B cell (primary cell): ENCODE measurements at regions of chr6 and their contacts with region 1.

Region 1: GRCh38 chr6:33323623-33323948 is 6.0 kb upstream of the ZBTB22 start:
- DNase-seq: no peak
- ATAC-seq: no peak
- H3K4me3 ChIP-seq: peak overlapping the region; percentile 72 to 93 (median 85)
- H3K4me3 Mint-ChIP-seq: peak overlapping the region; percentile 91
- H3K27ac ChIP-seq: peak overlapping the region; percentile 85 to 95
- H3K27ac Mint-ChIP-seq: peak overlapping the region; percentile 93
- H3K4me1 ChIP-seq: peaks cover 43 to 63% of the 10 kb centered on the region in 2 donors
- H3K4me1 Mint-ChIP-seq: peaks cover 59% of the 10 kb centered on the region
- H3K27me3 ChIP-seq: no peaks in the 10 kb centered on the region
- H3K27me3 Mint-ChIP-seq: no peaks in the 10 kb centered on the region
- CTCF ChIP-seq: no peak

Region 2: GRCh38 chr6:33288921-33289748 is 34.5 kb before region 1 on chr6 and contains the starts of genes PFDN6 and WDR46:
- CTCF ChIA-PET with region 1: interaction called, 10 read pairs
- POLR2A ChIA-PET with region 1: interaction called, 15 read pairs
- intact Hi-C with region 1: loop called (anchors 1 kb)
- DNase-seq: peak; percentile 93
- ATAC-seq: peak; percentile 96
- H3K4me3 ChIP-seq: peak within 1 kb of the TSS; percentile 78 to 99 (median 86)
- H3K4me3 Mint-ChIP-seq: peak within 1 kb of the TSS; percentile 93
- H3K27ac ChIP-seq: peak within 1 kb of the TSS; percentile 42 to 68
- H3K27ac Mint-ChIP-seq: peak within 1 kb of the TSS; percentile 86
- H3K4me1 ChIP-seq: peaks cover 19 to 25% of the 10 kb centered on the region in 2 donors
- H3K4me1 Mint-ChIP-seq: peaks cover 38% of the 10 kb centered on the region
- H3K27me3 ChIP-seq: no peaks in the 10 kb centered on the region
- H3K27me3 Mint-ChIP-seq: no peaks in the 10 kb centered on the region
- CTCF ChIP-seq: no peak
- total RNA-seq, gene PFDN6: 44.7 and 51.1 TPM in 2 replicates
- total RNA-seq, gene WDR46: 66.4 and 77.2 TPM in 2 replicates

Region 3: DNA sequence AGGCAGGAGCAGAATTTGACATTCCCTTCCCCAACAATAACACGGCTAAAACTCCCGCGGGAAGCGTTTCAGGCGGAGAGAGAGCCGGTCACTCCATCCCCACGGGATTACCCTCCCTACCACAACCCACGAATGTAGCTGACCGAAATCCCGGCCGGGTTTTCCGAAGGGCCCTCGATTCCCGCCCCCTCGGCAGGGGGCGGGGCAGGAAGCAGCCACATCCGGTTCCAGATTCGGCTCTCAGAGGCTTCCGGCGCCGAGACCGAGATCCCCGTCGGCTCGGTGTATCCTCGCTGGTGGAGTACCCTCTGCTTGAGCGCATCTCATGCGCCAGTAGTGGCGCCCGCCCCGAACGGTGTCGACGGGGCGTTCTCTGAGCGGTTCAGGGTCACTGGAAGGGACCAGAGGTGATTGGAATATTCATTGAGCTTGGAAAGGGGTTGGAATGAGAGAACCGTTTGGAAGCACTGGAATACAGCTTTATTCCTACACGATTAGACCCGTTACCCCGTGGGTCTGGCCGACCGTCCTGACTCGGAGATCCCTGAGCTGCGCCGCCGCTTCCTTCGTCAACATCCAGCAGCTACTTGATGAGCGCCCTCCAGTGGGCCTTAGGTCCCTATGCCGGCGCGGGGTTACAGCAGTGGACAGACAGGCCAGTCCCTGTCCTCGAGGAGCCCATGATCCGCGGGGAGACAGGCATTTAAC is 24.2 kb before region 1 on chr6:
- CTCF ChIA-PET with region 1: interaction called, 8 read pairs
- POLR2A ChIA-PET with region 1: interaction called, 8 read pairs
- intact Hi-C with region 1: loop called (anchors 1 kb)
- DNase-seq: peak; percentile 95
- ATAC-seq: peak; percentile 68
- H3K4me3 ChIP-seq: peak overlapping the region; percentile 71 to 96 (median 79)
- H3K4me3 Mint-ChIP-seq: peak overlapping the region; percentile 99
- H3K27ac ChIP-seq: peak overlapping the region; percentile 86 to 91
- H3K27ac Mint-ChIP-seq: peak overlapping the region; percentile 99
- H3K4me1 ChIP-seq: peaks cover 12 to 24% of the 10 kb centered on the region in 2 donors
- H3K4me1 Mint-ChIP-seq: peaks cover 38% of the 10 kb centered on the region
- H3K27me3 ChIP-seq: no peaks in the 10 kb centered on the region
- H3K27me3 Mint-ChIP-seq: no peaks in the 10 kb centered on the region
- CTCF ChIP-seq: peak; percentile 69

Region 4: GRCh38 chr6:33344701-33345697 is 21.4 kb after region 1 on chr6:
- CTCF ChIA-PET with region 1: interaction called, 50 read pairs
- POLR2A ChIA-PET with region 1: interaction called, 29 read pairs
- intact Hi-C with region 1: loop called (anchors 1 kb)
- DNase-seq: peak; percentile 91
- ATAC-seq: peak; percentile 31
- H3K4me3 ChIP-seq: peak overlapping the region in 4 of 5 experiments; percentile 13 to 59 (median 42)
- H3K4me3 Mint-ChIP-seq: peak overlapping the region; percentile 81
- H3K27ac ChIP-seq: peak overlapping the region; percentile 92 to 93
- H3K27ac Mint-ChIP-seq: peak overlapping the region; percentile 94
- H3K4me1 ChIP-seq: peaks cover 40 to 50% of the 10 kb centered on the region in 2 donors
- H3K4me1 Mint-ChIP-seq: peaks cover 36% of the 10 kb centered on the region
- H3K27me3 ChIP-seq: no peaks in the 10 kb centered on the region
- H3K27me3 Mint-ChIP-seq: no peaks in the 10 kb centered on the region
- CTCF ChIP-seq: peak; percentile 79

Region 5: DNA sequence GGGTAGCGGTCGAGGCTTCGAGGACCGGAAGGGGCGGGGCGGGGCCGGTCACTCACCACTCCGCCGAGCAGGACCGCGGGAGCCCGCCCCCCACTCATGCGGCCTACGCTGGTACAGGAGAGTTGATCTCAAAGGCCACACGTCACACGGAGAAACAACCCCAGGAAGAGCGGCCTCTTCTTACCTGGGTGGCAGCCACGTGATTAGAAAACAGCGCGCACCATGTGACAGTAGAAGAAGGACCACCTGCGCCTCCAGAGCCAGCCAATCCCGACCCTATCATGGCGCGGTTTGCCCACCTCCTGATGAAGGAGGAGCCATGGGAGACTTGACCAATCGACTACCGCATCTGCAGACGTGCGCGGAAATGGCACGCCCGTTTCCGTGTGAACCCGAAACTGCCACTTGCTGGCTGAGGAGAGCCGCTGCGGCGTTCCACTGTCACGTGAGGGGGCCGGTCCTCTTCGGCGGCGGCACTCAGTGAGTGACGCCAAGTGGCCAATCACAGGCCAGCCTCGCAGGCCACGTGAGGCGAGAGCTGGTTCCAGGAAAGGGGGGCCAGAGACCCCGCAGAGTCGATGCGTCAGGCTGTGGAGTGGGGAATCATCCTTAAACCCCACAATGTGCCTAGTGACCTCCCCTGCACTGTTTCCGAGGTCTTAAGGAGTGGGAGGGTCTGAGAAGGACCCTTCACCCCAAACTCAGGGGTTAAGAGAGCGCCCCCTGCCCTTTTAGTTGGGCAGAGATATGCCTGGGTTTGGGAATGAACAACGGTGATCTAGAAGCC is 94.5 kb after region 1 on chr6 and contains the start of gene CUTA:
- CTCF ChIA-PET with region 1: interaction called, 6 read pairs
- POLR2A ChIA-PET with region 1: interaction called, 6 read pairs
- intact Hi-C with region 1: loop called (anchors 1 kb)
- DNase-seq: peak; percentile 100
- ATAC-seq: peak; percentile 89
- H3K4me3 ChIP-seq: peak within 1 kb of the TSS; percentile 58 to 84 (median 69)
- H3K4me3 Mint-ChIP-seq: peak within 1 kb of the TSS; percentile 96
- H3K27ac ChIP-seq: peak within 1 kb of the TSS; percentile 89 to 93
- H3K27ac Mint-ChIP-seq: peak within 1 kb of the TSS; percentile 97
- H3K4me1 ChIP-seq: peaks cover 40 to 65% of the 10 kb centered on the region in 2 donors
- H3K4me1 Mint-ChIP-seq: peaks cover 63% of the 10 kb centered on the region
- H3K27me3 ChIP-seq: peaks cover 0 to 3% (median 0%) of the 10 kb centered on the region in 4 experiments
- H3K27me3 Mint-ChIP-seq: peaks cover 4% of the 10 kb centered on the region
- CTCF ChIP-seq: peak; percentile 28
- total RNA-seq, gene CUTA: 134 and 137 TPM in 2 replicates

Region 6: GRCh38 chr6:33508935-33509926 is 185.6 kb after region 1 on chr6:
- CTCF ChIA-PET with region 1: no interaction called
- POLR2A ChIA-PET with region 1: no interaction called
- intact Hi-C with region 1: no loop called
- DNase-seq: no peak
- ATAC-seq: no peak
- H3K4me3 ChIP-seq: no peak overlapping the region
- H3K4me3 Mint-ChIP-seq: peak overlapping the region; percentile 59
- H3K27ac ChIP-seq: no peak overlapping the region
- H3K27ac Mint-ChIP-seq: peak overlapping the region; percentile 35
- H3K4me1 ChIP-seq: peaks cover 13 to 16% of the 10 kb centered on the region in 2 donors
- H3K4me1 Mint-ChIP-seq: peaks cover 13% of the 10 kb centered on the region
- H3K27me3 ChIP-seq: peaks cover 0 to 7% (median 0%) of the 10 kb centered on the region in 4 experiments
- H3K27me3 Mint-ChIP-seq: peaks cover 8% of the 10 kb centered on the region
- CTCF ChIP-seq: no peak

Region 7: GRCh38 chr6:33711140-33712129 is 387.8 kb after region 1 on chr6 and contains the start of gene UQCC2:
- CTCF ChIA-PET with region 1: no interaction called
- POLR2A ChIA-PET with region 1: interaction called, 15 read pairs
- intact Hi-C with region 1: no loop called
- DNase-seq: peak; percentile 99
- ATAC-seq: peak; percentile 87
- H3K4me3 ChIP-seq: peak within 1 kb of the TSS; percentile 62 to 96 (median 93)
- H3K4me3 Mint-ChIP-seq: peak within 1 kb of the TSS; percentile 87
- H3K27ac ChIP-seq: peak within 1 kb of the TSS; percentile 83 to 88
- H3K27ac Mint-ChIP-seq: peak within 1 kb of the TSS; percentile 93
- H3K4me1 ChIP-seq: peaks cover 16 to 28% of the 10 kb centered on the region in 2 donors
- H3K4me1 Mint-ChIP-seq: peaks cover 33% of the 10 kb centered on the region
- H3K27me3 ChIP-seq: no peaks in the 10 kb centered on the region
- H3K27me3 Mint-ChIP-seq: no peaks in the 10 kb centered on the region
- CTCF ChIP-seq: peak; percentile 44
- total RNA-seq, gene UQCC2: 16.6 and 17.1 TPM in 2 replicates